Activated CD8-positive, alpha-beta T cell treated with anti-CD3 and anti-CD28 coated beads, Interleukin-2, amount 10 ng/mL, durations not matched to agents 7 days and 5 days (primary cell): ENCODE measurements at regions of chr7 and their contacts with region 1.

Region 1: GRCh38 chr7:135645296-135645904 is 16.9 kb upstream of the STMP1 start:
- DNase-seq: peak; percentile 28
- ATAC-seq: peak; percentile 51
- H3K4me3 Mint-ChIP-seq: no peak overlapping the region
- H3K27ac Mint-ChIP-seq: no peak overlapping the region
- H3K4me1 Mint-ChIP-seq: peaks cover 1% of the 10 kb centered on the region
- H3K27me3 Mint-ChIP-seq: no peaks in the 10 kb centered on the region

Region 2: GRCh38 chr7:135274495-135275268 is 370.7 kb before region 1 on chr7:
- CTCF ChIA-PET with region 1: interaction called, 64 read pairs
- POLR2A ChIA-PET with region 1: no interaction called
- DNase-seq: peak; percentile 83
- ATAC-seq: peak; percentile 82
- H3K4me3 Mint-ChIP-seq: no peak overlapping the region
- H3K27ac Mint-ChIP-seq: no peak overlapping the region
- H3K4me1 Mint-ChIP-seq: no peaks in the 10 kb centered on the region
- H3K27me3 Mint-ChIP-seq: peaks cover 3% of the 10 kb centered on the region

Region 3: DNA sequence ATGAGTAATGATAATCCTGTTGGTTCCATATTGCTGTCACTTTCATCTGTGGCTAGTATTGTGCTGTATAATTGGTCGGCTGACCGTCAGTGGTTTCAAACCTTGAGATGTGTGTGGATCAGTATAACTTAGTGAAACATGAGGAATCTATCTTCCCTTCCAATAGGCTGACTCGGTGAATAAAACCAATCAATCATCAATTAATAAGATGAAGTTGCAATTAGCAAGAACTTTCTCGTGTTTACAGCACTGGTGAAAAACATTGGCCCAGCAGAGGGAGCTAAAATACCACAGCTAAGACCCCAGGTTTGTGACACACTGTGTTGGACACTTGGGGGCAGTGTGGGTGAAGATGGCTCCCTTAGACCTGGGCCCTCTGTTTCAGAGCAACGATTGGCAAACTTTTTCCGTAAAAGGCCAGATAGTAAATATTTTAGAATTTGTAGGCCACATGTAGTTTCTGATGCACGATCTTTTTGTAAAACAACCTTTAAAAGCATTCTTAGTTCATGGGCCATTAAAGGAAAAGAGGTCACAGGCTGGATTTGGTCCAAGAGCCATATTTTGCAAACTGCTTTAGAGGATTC is 363.9 kb before region 1 on chr7:
- CTCF ChIA-PET with region 1: interaction called, 64 read pairs
- POLR2A ChIA-PET with region 1: no interaction called
- DNase-seq: peak; percentile 91
- ATAC-seq: peak; percentile 99
- H3K4me3 Mint-ChIP-seq: no peak overlapping the region
- H3K27ac Mint-ChIP-seq: no peak overlapping the region
- H3K4me1 Mint-ChIP-seq: peaks cover 17% of the 10 kb centered on the region
- H3K27me3 Mint-ChIP-seq: peaks cover 13% of the 10 kb centered on the region

Region 4: GRCh38 chr7:135620980-135621850 is 24.2 kb before region 1 on chr7:
- CTCF ChIA-PET with region 1: interaction called, 41 read pairs
- POLR2A ChIA-PET with region 1: no interaction called
- DNase-seq: peak; percentile 47
- ATAC-seq: no peak
- H3K4me3 Mint-ChIP-seq: no peak overlapping the region
- H3K27ac Mint-ChIP-seq: no peak overlapping the region
- H3K4me1 Mint-ChIP-seq: no peaks in the 10 kb centered on the region
- H3K27me3 Mint-ChIP-seq: no peaks in the 10 kb centered on the region

Region 5: DNA sequence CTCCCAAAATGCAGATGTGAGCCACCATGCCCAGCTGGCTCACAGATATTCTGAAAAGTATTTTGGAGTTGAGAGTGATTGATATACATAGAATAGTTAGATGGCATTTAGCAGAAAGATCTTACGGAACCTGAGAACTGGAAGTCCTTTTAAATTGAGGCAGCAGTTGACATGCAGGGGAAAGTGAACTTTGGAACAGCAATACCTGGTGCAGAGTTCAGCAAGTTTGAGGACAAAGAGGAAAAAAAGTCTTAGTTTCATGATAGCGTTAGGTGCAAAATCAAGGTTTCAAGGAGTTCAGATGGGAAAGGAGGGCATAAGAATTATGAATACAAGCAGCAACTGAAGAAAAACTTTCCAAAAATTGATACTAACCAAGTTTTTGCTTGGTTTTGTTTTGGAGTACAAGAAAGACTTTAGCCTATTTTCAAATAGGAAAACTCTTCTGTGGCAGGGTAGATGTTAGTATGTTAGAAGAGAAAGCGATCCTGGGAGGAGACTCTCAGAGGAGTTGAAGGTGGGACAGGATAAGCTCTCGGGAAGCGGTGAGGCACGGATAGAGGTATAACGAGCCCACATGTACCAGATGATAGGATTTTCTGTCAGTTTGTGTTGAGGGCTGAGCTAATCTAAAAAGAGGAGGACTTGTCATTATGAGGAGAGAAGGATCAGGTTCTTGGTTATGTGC is 11.1 kb before region 1 on chr7:
- CTCF ChIA-PET with region 1: interaction called, 18 read pairs
- POLR2A ChIA-PET with region 1: no interaction called
- DNase-seq: no peak
- ATAC-seq: no peak
- H3K4me3 Mint-ChIP-seq: no peak overlapping the region
- H3K27ac Mint-ChIP-seq: no peak overlapping the region
- H3K4me1 Mint-ChIP-seq: no peaks in the 10 kb centered on the region
- H3K27me3 Mint-ChIP-seq: no peaks in the 10 kb centered on the region

Region 6: DNA sequence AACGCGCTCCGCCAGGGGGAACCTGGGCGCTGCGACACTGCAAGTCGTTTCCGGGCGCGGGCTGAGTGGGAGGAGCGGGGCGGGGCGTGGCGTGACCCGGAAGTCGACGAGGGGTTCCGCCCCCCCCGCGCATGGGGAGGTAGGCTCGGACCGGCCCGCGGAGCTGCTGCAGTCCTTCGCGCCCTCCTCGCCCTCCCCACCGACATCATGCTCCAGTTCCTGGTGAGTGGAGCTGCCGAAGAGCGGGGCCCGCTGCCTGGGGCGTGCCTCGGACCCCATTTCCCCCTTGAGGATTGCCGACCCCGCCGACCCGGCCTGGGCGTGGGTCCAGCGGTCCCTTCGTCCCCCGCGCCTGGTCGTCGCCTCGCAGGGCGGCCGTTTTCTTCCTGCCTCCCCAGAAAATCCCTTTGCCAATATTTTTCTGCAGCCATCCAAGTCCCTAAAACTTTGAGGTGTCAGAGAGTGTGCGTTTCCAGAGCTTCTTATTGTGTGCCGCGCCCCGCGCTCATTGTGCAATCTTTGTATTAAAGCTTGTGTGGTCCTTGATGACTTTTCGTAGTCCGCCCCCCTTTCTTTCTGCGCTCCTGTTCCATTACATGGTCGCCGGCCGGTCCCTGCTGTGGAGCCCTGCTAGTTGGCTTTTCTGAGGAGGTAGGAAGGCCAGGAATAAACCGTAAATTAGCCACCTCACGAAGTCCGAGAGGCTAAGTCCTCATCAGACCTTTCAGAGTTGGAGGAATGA is 17.1 kb after region 1 on chr7 and contains the start of gene STMP1:
- CTCF ChIA-PET with region 1: interaction called, 73 read pairs
- POLR2A ChIA-PET with region 1: no interaction called
- DNase-seq: peak; percentile 96
- ATAC-seq: peak; percentile 99
- H3K4me3 Mint-ChIP-seq: peak within 1 kb of the TSS; percentile 83
- H3K27ac Mint-ChIP-seq: peak within 1 kb of the TSS; percentile 81
- H3K4me1 Mint-ChIP-seq: peaks cover 21% of the 10 kb centered on the region
- H3K27me3 Mint-ChIP-seq: no peaks in the 10 kb centered on the region
- total RNA-seq, gene STMP1: 22.2 to 22.9 TPM